ENCODE measurements at regions of chrX and their contacts with region 1.

Region 1: DNA sequence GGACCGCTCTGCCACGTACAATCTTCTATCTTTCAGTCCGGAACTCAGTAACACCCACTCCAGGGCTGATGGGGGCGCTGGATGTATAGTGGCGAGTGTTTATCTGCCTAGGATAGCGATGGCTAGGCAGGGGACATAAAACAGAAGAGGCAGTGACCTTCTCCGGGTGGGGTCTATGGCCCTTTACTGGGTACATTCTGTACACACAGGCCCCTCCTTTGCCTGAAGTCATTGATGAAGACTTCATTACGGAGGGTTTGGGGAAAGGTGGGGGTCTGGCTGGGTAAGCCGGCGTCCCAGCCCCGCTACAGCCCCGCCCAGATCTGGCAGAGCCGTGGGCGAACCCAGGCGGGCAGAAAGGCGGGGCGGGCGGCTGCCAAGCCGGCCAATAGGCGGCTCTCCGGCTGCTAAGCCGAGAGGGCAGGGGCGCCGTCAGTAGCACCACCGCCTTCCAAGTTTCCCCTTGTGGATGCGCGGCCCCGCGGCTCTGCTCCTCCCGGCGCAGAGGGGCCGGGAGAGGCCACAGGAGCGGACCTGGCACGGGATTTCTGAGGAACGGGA is at the start of gene CHST7:
- DNase-seq: peak; percentile 77
- ATAC-seq: peak; percentile 47
- H3K4me3 Mint-ChIP-seq: peak within 1 kb of the TSS; percentile 77
- H3K27ac Mint-ChIP-seq: peak within 1 kb of the TSS; percentile 95
- H3K4me1 Mint-ChIP-seq: peaks cover 41% of the 10 kb centered on the region
- H3K27me3 Mint-ChIP-seq: no peaks in the 10 kb centered on the region
- total RNA-seq, gene CHST7: 2.0 to 2.5 TPM

Region 2: GRCh38 chrX:45621376-45622041 is 951.9 kb before region 1 on chrX:
- CTCF ChIA-PET with region 1: no interaction called
- POLR2A ChIA-PET with region 1: no interaction called
- intact Hi-C with region 1: loop called in 1 of 2 experiments (anchors 5 kb)
- DNase-seq: peak; percentile 20
- ATAC-seq: peak; percentile 88
- H3K4me3 Mint-ChIP-seq: no peak overlapping the region
- H3K27ac Mint-ChIP-seq: peak overlapping the region; percentile 37
- H3K4me1 Mint-ChIP-seq: peaks cover 30% of the 10 kb centered on the region
- H3K27me3 Mint-ChIP-seq: peaks cover 3% of the 10 kb centered on the region

Region 3: DNA sequence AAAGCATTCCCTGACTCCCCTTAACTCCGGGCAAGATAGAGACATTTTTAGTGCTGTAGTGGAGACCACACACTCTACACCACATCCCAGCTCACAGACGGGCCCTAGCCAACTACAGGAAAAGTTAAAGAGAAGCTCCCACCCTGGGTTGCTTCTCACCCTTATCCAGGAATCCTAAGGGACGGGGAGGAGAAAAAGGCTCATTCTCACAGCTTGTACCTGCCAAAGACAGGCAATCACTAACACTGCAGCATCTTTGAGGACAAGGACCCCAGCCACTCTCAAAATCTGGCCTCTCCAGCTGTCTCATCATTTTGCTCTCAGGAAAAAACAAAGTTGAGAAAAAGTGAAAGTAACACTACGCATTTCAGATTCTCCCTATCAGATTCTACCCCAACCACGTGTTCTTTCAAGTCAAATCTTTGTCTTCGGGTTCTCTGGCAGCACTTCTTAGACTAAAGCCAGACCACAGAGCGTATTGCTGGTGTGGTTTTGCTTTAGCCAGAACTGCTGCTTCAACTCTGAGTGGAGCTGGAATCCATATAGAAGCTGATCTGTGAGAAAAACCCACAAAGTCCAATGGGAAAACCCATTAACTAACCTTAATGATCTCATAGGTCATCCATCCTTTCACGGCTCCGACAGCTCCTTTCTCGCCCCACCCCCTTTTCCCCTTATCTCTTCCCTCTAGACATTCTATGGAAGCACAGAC is 766.8 kb before region 1 on chrX:
- CTCF ChIA-PET with region 1: no interaction called
- POLR2A ChIA-PET with region 1: no interaction called
- intact Hi-C with region 1: loop called in 1 of 2 experiments (anchors 5 kb)
- DNase-seq: peak; percentile 65
- ATAC-seq: peak; percentile 52
- H3K4me3 Mint-ChIP-seq: peak overlapping the region; percentile 68
- H3K27ac Mint-ChIP-seq: peak overlapping the region; percentile 88
- H3K4me1 Mint-ChIP-seq: peaks cover 85% of the 10 kb centered on the region
- H3K27me3 Mint-ChIP-seq: no peaks in the 10 kb centered on the region

Region 4: GRCh38 chrX:46446727-46447378 is 126.6 kb before region 1 on chrX:
- CTCF ChIA-PET with region 1: no interaction called
- POLR2A ChIA-PET with region 1: no interaction called
- intact Hi-C with region 1: loop called in 1 of 2 experiments (anchors 1 kb)
- DNase-seq: peak; percentile 92
- ATAC-seq: peak; percentile 94
- H3K4me3 Mint-ChIP-seq: peak overlapping the region; percentile 82
- H3K27ac Mint-ChIP-seq: peak overlapping the region; percentile 96
- H3K4me1 Mint-ChIP-seq: peaks cover 22% of the 10 kb centered on the region
- H3K27me3 Mint-ChIP-seq: no peaks in the 10 kb centered on the region

Region 5: DNA sequence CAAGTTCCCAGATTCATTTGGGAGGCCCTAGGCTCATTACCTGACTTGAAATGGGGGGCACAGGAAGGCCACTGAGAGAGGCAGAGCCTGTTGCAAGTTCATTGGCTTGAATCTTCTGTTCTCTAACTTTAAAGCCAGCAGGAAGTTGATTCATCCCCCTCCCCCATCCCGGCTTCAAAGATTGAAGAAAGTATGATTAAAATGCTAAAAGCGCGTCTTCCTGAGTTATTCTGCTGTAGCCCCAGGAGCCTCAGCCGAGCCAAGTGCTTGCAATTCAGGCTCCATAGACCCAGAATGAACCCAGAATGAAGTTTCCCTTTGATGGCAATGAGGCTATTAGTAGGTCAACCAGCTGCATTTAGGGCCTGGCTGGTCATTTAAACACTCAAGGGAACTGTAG is 14.9 kb after region 1 on chrX:
- CTCF ChIA-PET with region 1: interaction called, 6 read pairs
- POLR2A ChIA-PET with region 1: interaction called, 6 read pairs
- intact Hi-C with region 1: loop called (anchors 1 to 2 kb)
- DNase-seq: peak; percentile 66
- ATAC-seq: peak; percentile 51
- H3K4me3 Mint-ChIP-seq: peak overlapping the region; percentile 40
- H3K27ac Mint-ChIP-seq: peak overlapping the region; percentile 84
- H3K4me1 Mint-ChIP-seq: peaks cover 44% of the 10 kb centered on the region
- H3K27me3 Mint-ChIP-seq: no peaks in the 10 kb centered on the region

Region 6: GRCh38 chrX:46642145-46642544 is 68.7 kb after region 1 on chrX:
- CTCF ChIA-PET with region 1: interaction called, 3 read pairs
- POLR2A ChIA-PET with region 1: no interaction called
- intact Hi-C with region 1: loop called (anchors 5 kb)
- DNase-seq: peak; percentile 14
- ATAC-seq: peak; percentile 83
- H3K4me3 Mint-ChIP-seq: no peak overlapping the region
- H3K27ac Mint-ChIP-seq: no peak overlapping the region
- H3K4me1 Mint-ChIP-seq: peaks cover 16% of the 10 kb centered on the region
- H3K27me3 Mint-ChIP-seq: no peaks in the 10 kb centered on the region

Region 7: GRCh38 chrX:46796574-46797191 is 223.3 kb after region 1 on chrX:
- CTCF ChIA-PET with region 1: no interaction called
- POLR2A ChIA-PET with region 1: no interaction called
- intact Hi-C with region 1: loop called (anchors 1 to 2 kb)
- DNase-seq: peak; percentile 84
- ATAC-seq: peak; percentile 63
- H3K4me3 Mint-ChIP-seq: no peak overlapping the region
- H3K27ac Mint-ChIP-seq: no peak overlapping the region
- H3K4me1 Mint-ChIP-seq: peaks cover 19% of the 10 kb centered on the region
- H3K27me3 Mint-ChIP-seq: peaks cover 2% of the 10 kb centered on the region